ENCODE measurements at regions of chr15 and their contacts with region 1.

Region 1: GRCh38 chr15:60787837-60788691 is 309.1 kb upstream of the ICE2 start:
- DNase-seq: no peak
- H3K4me3 ChIP-seq: no peak overlapping the region
- H3K27ac ChIP-seq: no peak overlapping the region
- H3K4me1 ChIP-seq: peaks cover 0 to 4% (median 1%) of the 10 kb centered on the region in 4 experiments; a peak in 3 of 7 replicates
- H3K27me3 ChIP-seq: no peaks in the 10 kb centered on the region
- CTCF ChIP-seq: peak; percentile 38 to 77 (median 62)
- EP300 ChIP-seq: no peak
- POLR2A ChIP-seq: no peak
- RAD21 ChIP-seq: peak; percentile 43 to 47; a peak in 3 of 4 replicates

Region 2: DNA sequence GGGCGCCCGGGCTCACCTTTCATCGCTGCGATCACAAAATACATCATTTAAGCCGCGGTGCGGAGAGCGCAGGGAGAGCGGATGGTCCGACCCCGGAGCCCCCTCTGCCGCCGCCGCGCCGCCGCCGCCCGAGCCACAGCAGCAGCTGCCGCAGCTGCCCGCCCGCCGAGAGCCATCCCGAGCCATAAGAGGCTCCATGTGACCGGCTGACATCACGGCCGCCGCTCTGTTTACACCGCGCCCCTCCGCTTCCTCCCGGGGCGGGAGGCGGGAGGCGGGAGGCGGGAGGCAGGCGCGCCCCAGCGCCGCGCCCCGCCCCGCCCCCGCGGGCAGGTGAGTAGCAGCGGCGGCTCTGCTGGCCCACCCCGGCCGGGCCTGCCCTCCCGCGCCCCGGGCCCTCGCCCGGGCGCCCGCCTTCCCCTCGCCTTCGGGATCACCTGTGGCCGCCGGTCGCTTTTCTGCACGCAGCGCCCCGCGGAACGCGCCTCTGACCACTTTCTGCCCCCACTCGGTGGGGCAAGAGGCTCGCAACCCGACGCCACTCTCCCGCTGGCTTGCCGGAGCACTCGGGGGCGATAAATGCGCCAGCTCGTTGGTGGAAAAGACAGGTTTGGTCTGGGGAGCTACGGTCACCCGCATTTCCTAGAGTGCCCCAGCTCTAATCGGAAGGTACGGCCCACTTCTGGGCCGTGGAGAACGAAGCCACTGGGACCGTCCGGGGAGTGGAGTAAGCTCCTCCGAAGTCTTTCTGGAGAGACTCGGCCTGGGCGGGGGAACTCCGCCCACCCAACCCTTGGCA is 195.5 kb before region 1 on chr15:
- CTCF ChIA-PET with region 1: interaction called, 11 read pairs
- POLR2A ChIA-PET with region 1: no interaction called
- DNase-seq: peak in 1 of 2 experiments; percentile 81
- H3K4me3 ChIP-seq: peak overlapping the region; percentile 79 to 82 (median 80)
- H3K27ac ChIP-seq: no peak overlapping the region
- H3K4me1 ChIP-seq: peaks cover 0 to 5% (median 2%) of the 10 kb centered on the region in 4 experiments; a peak in 2 of 7 replicates
- H3K27me3 ChIP-seq: peaks cover 0 to 7% (median 0%) of the 10 kb centered on the region in 4 experiments; a peak in 2 of 7 replicates
- CTCF ChIP-seq: peak; percentile 7 to 15 (median 9); a peak in 3 of 4 replicates
- EP300 ChIP-seq: no peak
- POLR2A ChIP-seq: peak in 1 of 2 experiments; percentile 72; a peak in 2 of 3 replicates
- RAD21 ChIP-seq: peak in 1 of 2 experiments; percentile 11; a peak in 2 of 4 replicates

Region 3: DNA sequence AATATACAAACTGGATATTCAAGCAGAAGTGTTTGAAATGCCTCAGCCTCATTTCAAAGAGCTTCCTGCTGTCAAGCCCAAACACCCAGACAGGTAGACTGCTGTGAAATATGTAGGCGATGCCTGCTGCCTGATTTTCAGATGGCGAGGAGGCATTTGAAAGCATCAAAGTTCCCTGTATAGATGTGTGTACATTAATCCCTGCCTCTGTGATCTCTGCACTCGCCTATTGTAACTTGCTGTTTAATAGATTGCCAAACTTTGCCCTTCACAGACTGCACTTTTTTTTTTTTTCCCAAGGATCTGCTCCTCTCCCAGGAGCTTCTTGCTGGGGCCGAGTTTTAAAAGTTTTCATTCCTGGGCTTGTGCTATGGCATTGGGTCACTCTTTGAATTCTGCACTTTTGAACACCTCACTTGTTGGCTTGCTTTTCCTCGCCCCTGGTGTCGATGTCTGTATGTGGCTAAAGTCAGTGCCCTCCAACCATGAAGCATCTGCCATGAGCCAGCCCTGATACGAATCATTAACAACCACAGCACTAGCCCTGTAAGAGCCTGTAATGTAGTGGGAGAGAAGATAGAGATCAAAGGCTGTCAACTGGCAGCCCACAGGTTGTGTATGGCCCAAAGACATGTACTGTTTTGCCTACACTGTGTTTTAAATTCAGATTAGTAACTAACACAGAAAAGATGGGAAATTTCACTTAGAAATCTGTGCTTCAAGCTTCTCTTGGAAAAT is 21.5 kb before region 1 on chr15:
- CTCF ChIA-PET with region 1: interaction called, 38 read pairs
- POLR2A ChIA-PET with region 1: interaction called, 3 read pairs
- DNase-seq: no peak
- H3K4me3 ChIP-seq: no peak overlapping the region
- H3K27ac ChIP-seq: no peak overlapping the region
- H3K4me1 ChIP-seq: peaks cover 0 to 5% (median 3%) of the 10 kb centered on the region in 4 experiments; a peak in 6 of 7 replicates
- H3K27me3 ChIP-seq: peaks cover 0 to 2% (median 0%) of the 10 kb centered on the region in 4 experiments; a peak in 1 of 7 replicates
- CTCF ChIP-seq: no peak
- EP300 ChIP-seq: no peak
- POLR2A ChIP-seq: no peak
- RAD21 ChIP-seq: no peak

Region 4: DNA sequence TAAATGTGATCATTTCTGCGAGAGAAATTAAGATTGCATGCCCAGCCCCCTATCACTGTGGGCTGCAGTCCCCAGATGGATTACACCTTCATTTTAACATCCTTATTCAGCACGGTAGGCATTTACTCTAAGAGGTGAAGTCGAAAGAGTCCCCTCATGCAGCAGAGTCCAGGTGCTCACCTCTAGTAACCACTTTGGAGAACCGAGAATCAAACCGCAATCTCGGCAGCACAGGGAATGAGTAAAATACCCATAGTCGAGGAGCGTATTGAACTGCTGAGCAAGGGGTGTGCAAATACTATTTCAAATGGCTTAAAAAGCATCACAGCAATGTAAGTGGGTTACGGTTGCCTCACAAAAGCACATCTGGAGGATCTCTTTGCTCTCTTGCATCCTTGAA is 10.5 kb before region 1 on chr15:
- CTCF ChIA-PET with region 1: interaction called, 38 read pairs
- POLR2A ChIA-PET with region 1: no interaction called
- DNase-seq: no peak
- H3K4me3 ChIP-seq: no peak overlapping the region
- H3K27ac ChIP-seq: no peak overlapping the region
- H3K4me1 ChIP-seq: peaks cover 2 to 18% (median 8%) of the 10 kb centered on the region in 4 experiments; a peak in 6 of 7 replicates
- H3K27me3 ChIP-seq: no peaks in the 10 kb centered on the region
- CTCF ChIP-seq: no peak
- EP300 ChIP-seq: no peak
- POLR2A ChIP-seq: no peak
- RAD21 ChIP-seq: no peak

Region 5: GRCh38 chr15:60824196-60824595 is 36.1 kb after region 1 on chr15:
- CTCF ChIA-PET with region 1: interaction called, 10 read pairs
- POLR2A ChIA-PET with region 1: no interaction called
- DNase-seq: no peak
- H3K4me3 ChIP-seq: no peak overlapping the region
- H3K27ac ChIP-seq: no peak overlapping the region
- H3K4me1 ChIP-seq: peaks cover 1 to 10% (median 5%) of the 10 kb centered on the region in 4 experiments
- H3K27me3 ChIP-seq: no peaks in the 10 kb centered on the region
- CTCF ChIP-seq: no peak
- EP300 ChIP-seq: no peak
- POLR2A ChIP-seq: no peak
- RAD21 ChIP-seq: no peak